A549 (cell line): ENCODE measurements at regions of chr16 and their contacts with region 1.

Region 1: GRCh38 chr16:56356276-56357240 is 68.8 kb downstream of the AMFR start:
- DNase-seq: peak; percentile 85 to 91
- ATAC-seq: peak; percentile 93 to 97
- H3K4me3 ChIP-seq: peak overlapping the region; percentile 38
- H3K27ac ChIP-seq: peak overlapping the region; percentile 70 to 81
- H3K4me1 ChIP-seq: peaks cover 12% of the 10 kb centered on the region
- CTCF ChIP-seq: peak; percentile 80
- EP300 ChIP-seq: no peak
- POLR2A ChIP-seq: no peak
- RAD21 ChIP-seq: peak; percentile 65 to 71

Region 2: GRCh38 chr16:56309008-56309407 is 47.5 kb before region 1 on chr16:
- CTCF ChIA-PET with region 1: no interaction called
- POLR2A ChIA-PET with region 1: no interaction called
- DNase-seq: no peak
- ATAC-seq: no peak; a peak in 1 of 6 replicates
- H3K4me3 ChIP-seq: no peak overlapping the region
- H3K27ac ChIP-seq: no peak overlapping the region
- H3K4me1 ChIP-seq: no peaks in the 10 kb centered on the region
- CTCF ChIP-seq: no peak
- EP300 ChIP-seq: no peak
- POLR2A ChIP-seq: no peak
- RAD21 ChIP-seq: no peak

Region 3: GRCh38 chr16:56324406-56324805 is 32.2 kb before region 1 on chr16:
- CTCF ChIA-PET with region 1: interaction called, 87 read pairs
- POLR2A ChIA-PET with region 1: no interaction called
- DNase-seq: no peak
- ATAC-seq: no peak
- H3K4me3 ChIP-seq: no peak overlapping the region
- H3K27ac ChIP-seq: no peak overlapping the region
- H3K4me1 ChIP-seq: no peaks in the 10 kb centered on the region
- CTCF ChIP-seq: no peak
- EP300 ChIP-seq: no peak
- POLR2A ChIP-seq: no peak
- RAD21 ChIP-seq: no peak

Region 4: DNA sequence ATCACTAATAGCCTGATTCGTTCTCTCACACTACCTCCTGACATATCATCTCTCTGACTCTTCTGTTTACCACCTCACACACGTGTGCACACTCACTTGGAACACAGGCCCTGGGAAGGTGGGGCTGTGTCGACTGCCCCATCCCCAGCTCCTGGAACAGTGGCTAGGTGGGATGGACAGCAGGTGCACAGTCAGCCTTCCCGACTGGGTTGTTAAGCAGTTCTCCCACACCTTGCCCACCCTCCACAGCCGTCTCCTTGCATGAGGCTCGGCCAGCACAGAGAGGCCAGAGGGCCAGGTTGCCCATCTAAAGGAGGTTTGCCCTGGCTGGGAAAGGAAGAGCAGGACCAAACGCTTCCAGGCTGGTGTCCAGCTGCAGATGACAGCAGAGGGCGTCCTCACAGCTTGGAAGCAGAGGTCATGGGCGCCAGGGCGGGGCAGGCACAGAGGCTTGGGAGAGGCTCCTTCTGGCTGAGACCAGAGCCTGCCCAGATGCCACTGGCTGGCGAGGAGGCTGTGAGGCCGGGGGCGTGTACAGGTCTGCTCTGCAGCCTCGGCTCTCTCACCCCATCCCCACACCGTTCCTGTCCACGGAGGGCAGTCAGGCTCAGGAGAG is 24.0 kb before region 1 on chr16:
- CTCF ChIA-PET with region 1: interaction called, 87 read pairs
- POLR2A ChIA-PET with region 1: interaction called, 5 read pairs
- DNase-seq: peak; percentile 79 to 86
- ATAC-seq: peak; percentile 93 to 98
- H3K4me3 ChIP-seq: no peak overlapping the region
- H3K27ac ChIP-seq: peak overlapping the region; percentile 43 to 55; a peak in 2 of 6 replicates
- H3K4me1 ChIP-seq: peaks cover 4% of the 10 kb centered on the region; the same call in 2 of the 3 replicates
- CTCF ChIP-seq: peak; percentile 74
- EP300 ChIP-seq: no peak
- POLR2A ChIP-seq: no peak
- RAD21 ChIP-seq: peak; percentile 77 to 79

Region 5: DNA sequence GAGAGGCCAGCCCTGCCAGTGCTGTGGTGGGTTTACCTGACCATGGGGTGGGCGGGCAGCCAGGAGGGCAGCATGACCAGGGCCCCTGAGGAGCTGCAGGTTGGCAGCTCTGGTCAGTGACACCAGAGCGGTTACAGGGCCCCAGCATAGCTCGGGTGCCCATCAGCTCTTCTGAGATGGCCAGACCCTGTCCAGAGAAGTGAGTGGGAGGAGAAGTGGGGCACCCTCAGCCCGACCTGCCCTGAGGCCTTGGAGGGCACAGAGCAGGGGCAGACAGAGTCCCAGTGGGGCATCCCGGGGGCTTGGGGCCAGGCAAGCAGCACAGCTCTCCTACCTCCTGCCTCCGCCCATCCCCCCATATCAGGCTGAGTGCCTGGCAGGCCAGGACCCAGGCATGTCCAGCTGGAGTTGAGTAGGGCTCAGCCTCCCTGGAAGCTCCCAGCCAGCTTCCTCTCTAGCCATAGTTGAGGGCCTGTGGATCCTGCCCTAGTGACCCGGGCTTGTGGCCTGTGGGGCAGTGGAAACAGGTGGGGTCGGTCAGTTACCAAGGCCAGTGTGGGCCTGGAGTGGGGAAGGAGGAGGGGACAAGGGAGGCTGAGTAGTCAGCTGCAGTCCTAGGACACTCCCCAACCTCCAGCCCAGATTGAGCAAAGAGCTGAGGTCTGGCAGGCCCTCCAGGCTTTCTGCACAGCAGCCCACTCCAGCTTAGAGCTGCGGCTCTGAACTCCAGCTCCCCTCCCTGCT is 14.7 kb before region 1 on chr16:
- CTCF ChIA-PET with region 1: interaction called, 39 read pairs
- POLR2A ChIA-PET with region 1: interaction called, 3 read pairs
- DNase-seq: no peak
- ATAC-seq: no peak; a peak in 2 of 6 replicates
- H3K4me3 ChIP-seq: no peak overlapping the region
- H3K27ac ChIP-seq: 0 out of 6 replicates have a peak overlapping the region, but pooled peaks of 1 of the 2 experiments have one; percentile 3
- H3K4me1 ChIP-seq: peaks cover 10% of the 10 kb centered on the region; the same call in 1 of the 3 replicates
- CTCF ChIP-seq: no peak
- EP300 ChIP-seq: no peak
- POLR2A ChIP-seq: no peak
- RAD21 ChIP-seq: no peak

Region 6: DNA sequence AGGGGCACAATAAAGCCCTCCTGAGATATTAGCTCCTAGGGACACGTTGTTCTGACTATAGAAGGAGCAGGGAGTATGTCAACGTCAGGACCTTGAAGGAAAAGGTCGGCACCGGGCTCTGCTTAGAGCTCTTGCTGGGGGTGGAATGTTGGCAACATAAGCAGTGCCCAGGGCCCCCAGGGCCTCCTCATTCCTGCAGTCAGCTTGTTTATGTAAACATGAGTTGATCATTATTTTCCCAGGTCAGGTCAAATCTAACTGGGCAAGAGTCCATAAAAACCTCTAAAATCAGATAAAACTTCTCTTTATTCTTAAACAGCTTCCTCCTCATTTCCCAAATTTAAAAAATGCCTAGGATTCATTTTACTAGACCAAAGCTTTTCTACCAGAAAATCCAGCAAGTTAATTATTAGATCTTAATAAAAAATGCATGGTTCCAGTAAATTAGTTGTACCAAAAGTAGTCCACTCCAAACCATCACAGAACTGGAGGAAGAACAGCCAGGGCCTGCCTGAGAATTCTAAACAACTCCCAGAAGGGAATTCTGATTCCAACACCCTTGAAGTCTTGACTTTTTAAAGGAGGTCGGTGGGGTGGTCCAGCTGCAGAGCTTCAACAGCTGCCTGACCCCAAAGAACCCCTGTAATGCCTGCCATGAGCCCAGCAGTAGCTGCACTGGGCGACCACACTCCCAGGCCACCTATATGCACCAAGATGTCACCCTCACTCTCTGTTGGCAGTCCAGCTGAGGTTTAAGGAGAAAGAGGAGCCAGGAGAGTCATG is 14.5 kb after region 1 on chr16:
- CTCF ChIA-PET with region 1: interaction called, 24 read pairs
- POLR2A ChIA-PET with region 1: no interaction called
- DNase-seq: peak in 1 of 2 experiments; percentile 53
- ATAC-seq: peak; percentile 51 to 80; a peak in 4 of 6 replicates
- H3K4me3 ChIP-seq: no peak overlapping the region
- H3K27ac ChIP-seq: peak overlapping the region; percentile 51 to 62; a peak in 5 of 6 replicates
- H3K4me1 ChIP-seq: peaks cover 37% of the 10 kb centered on the region
- CTCF ChIP-seq: no peak
- EP300 ChIP-seq: no peak
- POLR2A ChIP-seq: no peak
- RAD21 ChIP-seq: no peak

Region 7: DNA sequence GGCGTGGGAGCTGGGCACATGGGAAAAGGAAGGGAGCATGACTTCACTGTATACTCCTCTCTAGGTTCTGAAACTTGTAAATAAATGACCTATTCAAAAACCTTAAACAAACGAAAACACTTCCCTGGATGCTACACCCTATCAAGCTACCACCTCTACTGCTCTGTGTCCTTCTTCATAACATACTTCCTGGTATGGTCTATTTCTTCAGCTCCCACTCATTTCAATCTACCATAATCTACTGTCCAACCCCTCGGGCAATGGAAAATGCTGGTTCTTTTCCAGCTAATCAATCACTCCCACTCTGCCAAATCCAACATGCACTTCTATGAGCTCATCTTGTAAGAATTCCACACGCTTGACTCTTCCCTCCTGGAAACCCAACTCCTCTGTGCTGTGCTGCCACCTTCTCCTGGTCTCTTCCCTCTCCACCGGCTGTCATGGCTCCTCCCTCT is 26.4 kb after region 1 on chr16:
- CTCF ChIA-PET with region 1: interaction called, 14 read pairs
- POLR2A ChIA-PET with region 1: no interaction called
- DNase-seq: peak; percentile 34 to 65
- ATAC-seq: peak; percentile 89 to 90
- H3K4me3 ChIP-seq: no peak overlapping the region
- H3K27ac ChIP-seq: peak overlapping the region in 1 of 2 experiments; percentile 24; a peak in 4 of 6 replicates
- H3K4me1 ChIP-seq: peaks cover 15% of the 10 kb centered on the region
- CTCF ChIP-seq: no peak
- EP300 ChIP-seq: no peak
- POLR2A ChIP-seq: no peak
- RAD21 ChIP-seq: no peak

Region 8: GRCh38 chr16:56426585-56426984 is 70.0 kb after region 1 on chr16:
- CTCF ChIA-PET with region 1: interaction called, 11 read pairs
- POLR2A ChIA-PET with region 1: no interaction called
- DNase-seq: no peak
- ATAC-seq: peak in 1 of 2 experiments; percentile 11; a peak in 3 of 6 replicates
- H3K4me3 ChIP-seq: no peak overlapping the region
- H3K27ac ChIP-seq: peak overlapping the region in 1 of 2 experiments; percentile 92; a peak in 3 of 6 replicates
- H3K4me1 ChIP-seq: peaks cover 37% of the 10 kb centered on the region
- CTCF ChIP-seq: no peak
- EP300 ChIP-seq: no peak
- POLR2A ChIP-seq: no peak
- RAD21 ChIP-seq: no peak